ENCODE measurements at regions of chr12 and their contacts with region 1.

Region 1: GRCh38 chr12:68904351-68904962 is 28.5 kb downstream of the CPM start:
- DNase-seq: no peak
- ATAC-seq: no peak

Region 2: GRCh38 chr12:68951652-68952051 is 47.2 kb after region 1 on chr12:
- intact Hi-C with region 1: loop called (anchors 2 kb)
- DNase-seq: no peak
- ATAC-seq: peak; percentile 84

Measured in sciatic nerve (tissue), 2 donors.